Psoas muscle (tissue), 8 donors: ENCODE measurements at regions of chr1 and their contacts with region 1.

Region 1: DNA sequence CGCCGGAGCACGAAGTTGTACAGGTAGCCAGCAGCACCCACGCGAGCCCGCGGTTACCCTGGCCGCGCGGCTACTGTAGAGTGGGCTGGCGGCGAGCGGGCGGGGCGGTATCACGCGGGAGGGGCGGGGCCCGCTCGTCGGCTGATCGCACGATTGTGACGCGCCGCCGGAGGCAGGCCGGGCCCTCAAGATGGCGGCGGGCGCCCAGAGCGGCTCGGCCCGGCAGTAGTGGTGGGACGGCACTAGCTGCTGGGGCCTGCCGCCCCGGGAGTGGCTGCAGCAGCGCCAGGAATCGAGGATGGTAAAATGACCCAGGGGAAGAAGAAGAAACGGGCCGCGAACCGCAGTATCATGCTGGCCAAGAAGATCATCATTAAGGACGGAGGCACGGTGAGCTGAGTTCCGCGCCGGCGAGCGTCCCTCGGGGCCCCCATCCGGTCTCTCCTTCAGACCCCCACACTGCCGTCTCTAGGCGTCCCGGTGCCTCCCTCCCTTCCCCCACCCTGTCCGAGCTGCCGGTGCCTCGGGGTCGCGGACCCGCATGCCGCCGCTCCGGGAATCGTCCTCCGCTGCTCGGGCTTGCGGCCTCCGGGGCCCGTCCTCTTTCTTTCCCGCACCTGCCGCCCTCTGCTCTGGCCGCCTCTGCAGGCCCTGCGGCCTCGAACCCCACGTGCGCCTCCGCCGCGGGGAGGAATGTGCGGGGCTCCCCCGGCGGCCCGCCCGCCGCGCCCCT is 68.3 kb downstream of the SLC35A3 start:
- DNase-seq: peak; percentile 92 to 93
- ATAC-seq: peak; percentile 98 to 99 (median 99)
- H3K4me3 ChIP-seq: peak overlapping the region; percentile 92
- H3K27ac ChIP-seq: peak overlapping the region; percentile 96
- H3K4me1 ChIP-seq: peaks cover 42% of the 10 kb centered on the region
- H3K27me3 ChIP-seq: no peaks in the 10 kb centered on the region
- CTCF ChIP-seq: no peak

Region 2: GRCh38 chr1:99808391-99809115 is 229.5 kb before region 1 on chr1:
- intact Hi-C with region 1: loop called in 1 of 2 experiments (anchors 10 kb)
- DNase-seq: no peak
- ATAC-seq: peak; percentile 93 to 97 (median 94)
- H3K4me3 ChIP-seq: peak overlapping the region; percentile 46
- H3K27ac ChIP-seq: peak overlapping the region; percentile 76
- H3K4me1 ChIP-seq: peaks cover 9% of the 10 kb centered on the region
- H3K27me3 ChIP-seq: peaks cover 0 to 7% (median 6%) of the 10 kb centered on the region in 3 donors
- CTCF ChIP-seq: peak; percentile 68

Region 3: DNA sequence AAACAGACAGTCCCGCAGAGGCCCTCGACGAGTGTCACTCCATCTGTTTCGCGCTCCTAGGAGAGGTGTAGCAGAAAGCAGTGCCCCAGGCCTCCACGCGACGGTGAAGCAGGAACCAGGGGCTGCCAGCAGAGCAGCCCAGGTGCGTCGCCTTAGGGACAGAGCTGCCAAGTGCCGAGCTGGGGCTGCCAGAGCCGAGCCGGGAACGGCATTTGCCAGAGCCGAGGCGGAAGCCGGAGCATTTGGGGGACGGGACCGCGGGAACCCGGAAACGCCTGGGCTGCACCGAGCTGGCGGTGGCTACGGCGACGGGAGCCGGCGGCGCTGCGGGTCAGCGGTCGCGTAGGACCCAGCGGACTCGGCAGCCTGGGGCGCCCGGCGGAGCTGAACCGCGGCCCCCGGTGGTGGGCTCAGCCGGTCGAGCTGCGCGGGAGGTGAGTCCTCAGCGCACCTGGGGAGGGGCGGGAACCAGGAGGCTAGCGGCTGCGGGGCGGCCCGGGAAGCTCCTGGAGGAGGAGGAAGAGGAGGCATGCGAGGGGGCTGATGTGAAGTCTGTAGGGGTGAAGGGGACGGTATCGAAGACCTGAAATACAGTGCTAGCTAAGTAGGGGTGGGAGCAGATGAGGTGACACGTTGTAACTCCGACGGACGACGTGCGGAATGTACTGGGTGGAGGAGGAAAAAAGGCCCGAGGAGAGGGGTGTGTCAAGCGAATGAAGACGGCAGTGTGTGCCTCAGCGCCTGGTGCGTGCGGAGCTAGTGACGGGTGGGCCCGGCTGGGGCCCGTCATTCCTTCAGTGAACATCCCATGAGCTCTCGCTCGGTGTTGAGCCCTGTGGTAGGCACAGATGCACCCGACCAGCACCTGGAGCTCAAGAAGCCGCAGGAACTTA is 68.1 kb before region 1 on chr1 and contains the start of gene SLC35A3:
- intact Hi-C with region 1: loop called in 1 of 2 experiments (anchors 5 kb)
- DNase-seq: peak; percentile 81 to 90
- ATAC-seq: peak; percentile 91 to 98 (median 96)
- H3K4me3 ChIP-seq: peak within 1 kb of the TSS; percentile 98
- H3K27ac ChIP-seq: peak within 1 kb of the TSS; percentile 74
- H3K4me1 ChIP-seq: peaks cover 13% of the 10 kb centered on the region
- H3K27me3 ChIP-seq: no peaks in the 10 kb centered on the region
- CTCF ChIP-seq: no peak
- total RNA-seq, gene SLC35A3: 4.5 to 8.6 (median 7.5) TPM

Region 4: GRCh38 chr1:100065183-100065968 is 27.3 kb after region 1 on chr1:
- intact Hi-C with region 1: no loop called
- DNase-seq: no peak
- ATAC-seq: no peak
- H3K4me3 ChIP-seq: no peak overlapping the region
- H3K27ac ChIP-seq: no peak overlapping the region
- H3K4me1 ChIP-seq: no peaks in the 10 kb centered on the region
- H3K27me3 ChIP-seq: no peaks in the 10 kb centered on the region
- CTCF ChIP-seq: no peak

Region 5: DNA sequence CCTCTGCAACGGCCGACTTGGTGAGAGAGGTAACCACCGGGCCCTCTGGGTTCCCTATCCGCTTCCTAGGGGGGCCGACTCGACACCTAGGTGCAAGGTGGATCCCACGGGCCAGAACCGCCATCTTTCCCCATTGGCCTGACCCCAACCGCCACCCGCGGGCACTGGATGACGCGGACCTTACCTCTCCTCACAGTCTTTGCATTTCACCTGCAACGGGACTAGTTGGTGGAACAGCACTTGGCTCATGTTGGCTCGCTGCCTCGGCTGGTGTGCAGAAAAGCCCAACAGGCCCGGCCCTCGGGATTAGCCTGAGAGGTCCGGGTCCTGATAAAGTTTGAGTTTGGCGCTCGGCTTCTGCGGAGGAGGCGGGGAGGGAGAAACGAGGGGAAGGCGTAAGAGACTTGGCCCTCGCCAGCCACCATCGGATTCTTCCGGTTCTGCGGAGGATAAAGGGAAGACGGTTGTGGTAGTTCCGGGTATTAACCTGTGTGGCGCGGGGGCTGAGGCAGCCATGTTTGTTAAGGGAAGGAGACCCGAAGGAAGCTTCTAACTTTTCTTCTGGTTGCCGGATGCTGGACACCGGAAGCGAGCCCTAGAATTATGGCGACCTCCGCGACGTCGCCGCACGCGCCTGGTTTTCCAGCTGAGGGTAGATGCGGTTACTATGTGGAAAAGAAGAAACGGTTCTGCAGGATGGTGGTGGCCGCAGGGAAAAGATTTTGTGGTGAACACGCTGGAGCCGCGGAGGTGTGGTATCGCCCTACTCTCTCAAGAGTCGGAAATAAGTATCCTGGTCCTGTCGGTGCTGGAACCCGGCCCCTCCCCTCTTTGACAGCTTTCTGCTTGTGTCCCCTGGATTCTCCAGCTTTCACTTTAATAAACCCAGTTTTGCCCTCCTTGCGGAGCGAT is 94.7 kb after region 1 on chr1 and contains the starts of genes SASS6 and TRMT13:
- intact Hi-C with region 1: no loop called
- DNase-seq: peak; percentile 97 to 98
- ATAC-seq: peak; percentile 98 to 100 (median 99)
- H3K4me3 ChIP-seq: peak within 1 kb of the TSS; percentile 92
- H3K27ac ChIP-seq: peak within 1 kb of the TSS; percentile 87
- H3K4me1 ChIP-seq: peaks cover 30% of the 10 kb centered on the region
- H3K27me3 ChIP-seq: no peaks in the 10 kb centered on the region
- CTCF ChIP-seq: no peak
- total RNA-seq, gene SASS6: 1.1 to 1.5 (median 1.3) TPM
- total RNA-seq, gene TRMT13: 4.9 to 12.4 (median 8.6) TPM